ENCODE measurements at regions of chr6 and their contacts with region 1.

Region 1: GRCh38 chr6:70310063-70310694 is 7.3 kb upstream of the COL9A1 start:
- DNase-seq: peak; percentile 58
- H3K4me3 Mint-ChIP-seq: no peak overlapping the region
- H3K27ac Mint-ChIP-seq: no peak overlapping the region
- H3K4me1 Mint-ChIP-seq: peaks cover 15% of the 10 kb centered on the region
- H3K27me3 Mint-ChIP-seq: peaks cover 88% of the 10 kb centered on the region
- CTCF ChIP-seq: peak; percentile 43

Region 2: DNA sequence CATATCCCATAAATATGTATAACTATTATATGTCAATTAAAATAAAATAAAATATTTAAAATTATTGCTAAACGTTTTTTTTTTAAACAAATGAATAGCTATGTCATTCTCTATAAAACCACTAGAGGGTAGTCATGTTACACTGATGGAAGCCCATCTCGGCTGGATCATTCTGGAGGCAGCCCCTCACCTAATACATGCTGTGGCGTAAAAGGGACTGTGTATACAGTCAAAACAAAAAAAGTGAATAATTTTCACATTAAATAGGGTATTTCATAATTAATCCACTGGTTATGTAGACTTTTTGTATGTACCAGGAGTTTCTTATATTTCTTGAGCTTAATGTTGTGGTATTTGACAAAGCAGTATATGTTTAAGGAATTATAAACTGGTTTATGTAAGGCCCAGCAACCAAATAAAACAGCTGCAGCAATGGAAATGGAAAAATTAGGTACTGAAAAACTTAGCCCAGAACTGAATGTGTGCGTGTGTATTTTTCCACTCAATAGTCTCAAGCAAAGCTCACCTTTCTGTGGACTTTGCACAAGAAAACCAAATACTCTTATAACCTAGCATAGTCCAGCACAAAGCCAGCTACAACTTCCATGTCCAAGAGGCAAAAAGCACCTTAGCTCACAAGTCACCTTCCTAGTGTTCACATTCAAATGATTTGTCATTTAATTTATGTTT is 89.0 kb before region 1 on chr6:
- CTCF ChIA-PET with region 1: interaction called, 38 read pairs
- POLR2A ChIA-PET with region 1: no interaction called
- intact Hi-C with region 1: loop called (anchors 5 kb)
- DNase-seq: peak; percentile 33
- H3K4me3 Mint-ChIP-seq: no peak overlapping the region
- H3K27ac Mint-ChIP-seq: no peak overlapping the region
- H3K4me1 Mint-ChIP-seq: no peaks in the 10 kb centered on the region
- H3K27me3 Mint-ChIP-seq: peaks cover 100% of the 10 kb centered on the region
- CTCF ChIP-seq: peak; percentile 71

Region 3: GRCh38 chr6:70353343-70353913 is 43.2 kb after region 1 on chr6:
- CTCF ChIA-PET with region 1: interaction called, 17 read pairs
- POLR2A ChIA-PET with region 1: no interaction called
- intact Hi-C with region 1: no loop called
- DNase-seq: no peak
- H3K4me3 Mint-ChIP-seq: no peak overlapping the region
- H3K27ac Mint-ChIP-seq: no peak overlapping the region
- H3K4me1 Mint-ChIP-seq: peaks cover 5% of the 10 kb centered on the region
- H3K27me3 Mint-ChIP-seq: peaks cover 70% of the 10 kb centered on the region
- CTCF ChIP-seq: no peak

Region 4: GRCh38 chr6:70413114-70413991 is 103.2 kb after region 1 on chr6 and contains the start of gene FAM135A:
- CTCF ChIA-PET with region 1: interaction called, 12 read pairs
- POLR2A ChIA-PET with region 1: interaction called, 8 read pairs
- intact Hi-C with region 1: loop called (anchors 1 kb)
- DNase-seq: peak; percentile 99
- H3K4me3 Mint-ChIP-seq: peak within 1 kb of the TSS; percentile 92
- H3K27ac Mint-ChIP-seq: peak within 1 kb of the TSS; percentile 75
- H3K4me1 Mint-ChIP-seq: no peaks in the 10 kb centered on the region
- H3K27me3 Mint-ChIP-seq: no peaks in the 10 kb centered on the region
- CTCF ChIP-seq: no peak
- total RNA-seq, gene FAM135A: 20.4 and 22.0 TPM in 2 replicates

Region 5: GRCh38 chr6:70547313-70547712 is 237.1 kb after region 1 on chr6:
- CTCF ChIA-PET with region 1: interaction called, 11 read pairs
- POLR2A ChIA-PET with region 1: no interaction called
- intact Hi-C with region 1: no loop called
- DNase-seq: peak; percentile 10
- H3K4me3 Mint-ChIP-seq: no peak overlapping the region
- H3K27ac Mint-ChIP-seq: no peak overlapping the region
- H3K4me1 Mint-ChIP-seq: no peaks in the 10 kb centered on the region
- H3K27me3 Mint-ChIP-seq: no peaks in the 10 kb centered on the region
- CTCF ChIP-seq: peak; percentile 28

Region 6: DNA sequence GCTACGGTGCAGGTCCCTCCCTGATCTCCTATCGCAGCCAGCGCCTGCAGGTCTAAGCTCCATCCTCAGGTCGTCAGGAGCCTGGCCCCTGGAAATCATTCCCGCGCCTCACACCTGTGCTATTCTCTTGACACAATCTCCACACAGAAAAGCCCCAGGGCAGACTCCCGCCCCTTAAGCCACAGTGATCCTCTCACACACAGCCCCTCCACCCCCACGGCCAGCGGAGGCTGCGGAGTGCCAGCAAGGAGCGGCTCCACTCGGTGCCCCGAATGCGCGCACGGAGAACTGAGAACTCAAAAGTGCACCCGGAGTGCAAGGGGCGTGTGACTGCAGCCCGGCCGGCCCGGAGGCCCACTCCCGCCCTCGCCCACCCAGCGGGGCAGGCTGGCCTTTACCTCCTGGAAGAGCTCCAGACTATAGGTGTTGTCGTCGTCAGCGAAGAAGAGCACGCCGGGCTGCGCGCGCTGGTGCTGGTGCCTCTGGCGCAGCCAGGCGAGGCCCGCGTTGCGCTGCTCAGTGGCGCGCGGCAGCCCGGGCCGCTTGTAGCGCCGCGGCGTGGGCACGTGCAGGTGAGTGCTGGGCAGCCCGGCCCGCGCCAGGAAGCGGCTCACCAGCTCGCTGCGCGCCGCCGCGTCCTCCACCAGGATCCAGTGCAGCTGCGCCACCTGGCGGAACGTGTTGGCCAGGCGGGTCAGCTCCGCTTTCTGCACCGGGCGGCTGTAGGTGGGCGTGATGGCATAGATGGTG is 645.4 kb after region 1 on chr6:
- CTCF ChIA-PET with region 1: interaction called, 21 read pairs
- POLR2A ChIA-PET with region 1: no interaction called
- intact Hi-C with region 1: loop called (anchors 5 kb)
- DNase-seq: peak; percentile 79
- H3K4me3 Mint-ChIP-seq: peak overlapping the region; percentile 67
- H3K27ac Mint-ChIP-seq: no peak overlapping the region
- H3K4me1 Mint-ChIP-seq: no peaks in the 10 kb centered on the region
- H3K27me3 Mint-ChIP-seq: peaks cover 96% of the 10 kb centered on the region
- CTCF ChIP-seq: peak; percentile 86